Heart left ventricle (tissue), 16 donors: ENCODE measurements at regions of chr15 and their contacts with region 1.

Region 1: DNA sequence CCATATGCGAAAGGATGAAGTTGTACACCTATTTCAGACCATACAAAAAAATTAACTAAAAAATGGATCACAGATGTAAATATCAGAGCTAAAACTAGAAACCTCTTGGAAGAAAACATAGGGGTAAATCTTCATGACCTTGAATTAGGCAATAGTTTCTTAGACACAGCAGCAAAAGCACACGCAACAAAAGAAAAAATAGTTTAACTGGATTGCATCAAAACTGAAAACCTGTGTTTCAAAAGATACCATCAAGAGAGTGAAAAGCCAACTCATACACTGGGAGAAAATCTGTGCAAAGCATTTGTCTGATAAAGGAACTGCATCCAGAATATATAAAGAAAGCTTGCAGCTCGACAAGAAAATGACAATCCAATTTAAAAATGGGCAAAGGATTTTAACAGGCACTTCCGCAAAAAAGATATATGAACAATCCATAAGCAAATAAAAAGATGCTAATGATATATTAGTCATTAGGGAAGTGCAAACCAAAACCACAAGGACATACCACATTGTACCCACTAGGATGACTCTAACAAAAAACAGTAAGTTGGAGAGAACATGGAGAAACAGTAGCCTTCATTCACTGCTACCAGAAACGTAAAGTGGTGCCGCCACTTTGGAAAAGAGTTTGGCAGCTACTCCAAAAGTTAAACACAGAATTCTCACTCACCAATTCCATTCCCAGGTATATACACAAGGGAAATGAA is 263.1 kb downstream of the ADAMTS17 start:
- DNase-seq: no peak
- ATAC-seq: no peak
- H3K4me3 ChIP-seq: no peak overlapping the region
- H3K27ac ChIP-seq: no peak overlapping the region
- H3K4me1 ChIP-seq: peaks cover 0 to 14% (median 5%) of the 10 kb centered on the region in 12 donors
- H3K27me3 ChIP-seq: no peaks in the 10 kb centered on the region
- CTCF ChIP-seq: no peak
- POLR2A ChIP-seq: no peak

Region 2: DNA sequence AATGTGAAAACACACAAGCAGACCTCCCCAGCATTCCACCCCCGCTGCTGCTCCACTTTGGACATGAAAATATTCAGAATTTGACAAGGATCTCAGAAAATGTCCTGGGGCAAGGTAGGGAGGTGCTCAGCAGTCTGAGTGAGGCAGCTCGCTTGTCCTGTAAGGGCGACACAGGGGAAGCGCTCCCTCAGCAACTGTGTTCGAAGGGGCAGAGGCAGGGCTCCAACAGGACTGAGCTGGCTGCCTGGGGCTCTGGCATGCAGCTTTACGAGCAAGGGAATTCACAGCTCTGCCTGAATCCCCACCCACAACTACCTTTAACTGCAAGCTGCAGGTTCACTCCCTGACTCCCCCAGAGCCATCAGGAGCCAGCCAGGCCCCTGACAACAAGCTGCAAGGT is 58.5 kb before region 1 on chr15:
- intact Hi-C with region 1: loop called in 1 of 10 experiments (anchors 10 kb)
- DNase-seq: no peak
- ATAC-seq: peak in 3 of 4 donors; percentile 17 to 49 (median 44)
- H3K4me3 ChIP-seq: no peak overlapping the region
- H3K27ac ChIP-seq: peak overlapping the region in 1 of 12 donors; percentile 56
- H3K4me1 ChIP-seq: peaks cover 0 to 21% (median 0%) of the 10 kb centered on the region in 12 donors
- H3K27me3 ChIP-seq: no peaks in the 10 kb centered on the region
- CTCF ChIP-seq: no peak
- POLR2A ChIP-seq: no peak

Region 3: DNA sequence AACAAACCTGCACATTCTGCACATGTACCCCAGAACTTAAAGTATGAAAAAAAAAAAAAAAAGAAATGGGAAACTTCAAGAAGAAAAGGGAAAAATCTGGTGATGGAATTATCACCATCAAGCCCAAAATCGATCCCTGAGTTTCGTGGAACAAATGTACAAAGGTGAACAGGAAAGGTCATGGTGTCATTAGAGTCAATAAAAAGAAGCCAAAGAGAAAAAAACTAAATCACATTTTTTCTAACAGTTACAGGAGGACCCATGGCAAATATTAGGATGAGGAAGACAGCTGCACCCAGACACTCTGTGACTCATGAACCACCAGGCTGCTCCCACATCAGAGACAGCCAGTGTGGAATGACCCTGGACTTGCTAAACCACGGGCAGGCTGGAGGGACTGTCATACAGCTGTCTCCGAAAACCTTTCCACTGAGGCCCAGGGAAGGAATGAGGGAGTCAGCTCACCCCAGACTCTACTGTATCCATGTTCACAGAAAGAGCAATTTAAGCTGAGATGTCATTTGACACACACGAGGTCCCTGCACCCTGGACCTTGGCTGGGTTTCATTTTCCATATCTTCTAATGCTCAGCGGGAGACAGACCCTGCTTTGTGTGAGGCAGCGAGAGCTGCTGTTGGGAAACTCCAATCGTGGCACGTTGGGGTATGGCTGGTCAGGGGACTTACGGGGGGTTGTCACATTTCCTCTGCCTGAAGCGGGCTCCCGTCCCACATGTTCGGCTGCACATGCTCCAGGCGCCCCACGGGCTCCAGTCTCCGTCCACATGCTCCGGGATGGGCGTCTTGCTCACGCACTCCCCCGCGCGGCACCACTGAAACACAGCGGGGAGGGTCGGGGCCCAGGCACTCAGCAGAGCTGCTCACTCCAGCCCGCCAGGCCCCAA is 52.9 kb after region 1 on chr15:
- intact Hi-C with region 1: loop called in 1 of 10 experiments (anchors 10 kb)
- DNase-seq: peak; percentile 71 to 81 (median 77)
- ATAC-seq: peak in 3 of 4 donors; percentile 91 to 94 (median 92)
- H3K4me3 ChIP-seq: peak overlapping the region in 9 of 12 donors; percentile 20 to 52 (median 39)
- H3K27ac ChIP-seq: peak overlapping the region in 8 of 12 donors; percentile 3 to 64 (median 44)
- H3K4me1 ChIP-seq: peaks cover 0 to 13% (median 0%) of the 10 kb centered on the region in 12 donors
- H3K27me3 ChIP-seq: no peaks in the 10 kb centered on the region
- CTCF ChIP-seq: peak; percentile 39 to 80 (median 57)
- POLR2A ChIP-seq: no peak